IMR-90 (cell line): ENCODE measurements at regions of chr22 and their contacts with region 1.

Region 1: DNA sequence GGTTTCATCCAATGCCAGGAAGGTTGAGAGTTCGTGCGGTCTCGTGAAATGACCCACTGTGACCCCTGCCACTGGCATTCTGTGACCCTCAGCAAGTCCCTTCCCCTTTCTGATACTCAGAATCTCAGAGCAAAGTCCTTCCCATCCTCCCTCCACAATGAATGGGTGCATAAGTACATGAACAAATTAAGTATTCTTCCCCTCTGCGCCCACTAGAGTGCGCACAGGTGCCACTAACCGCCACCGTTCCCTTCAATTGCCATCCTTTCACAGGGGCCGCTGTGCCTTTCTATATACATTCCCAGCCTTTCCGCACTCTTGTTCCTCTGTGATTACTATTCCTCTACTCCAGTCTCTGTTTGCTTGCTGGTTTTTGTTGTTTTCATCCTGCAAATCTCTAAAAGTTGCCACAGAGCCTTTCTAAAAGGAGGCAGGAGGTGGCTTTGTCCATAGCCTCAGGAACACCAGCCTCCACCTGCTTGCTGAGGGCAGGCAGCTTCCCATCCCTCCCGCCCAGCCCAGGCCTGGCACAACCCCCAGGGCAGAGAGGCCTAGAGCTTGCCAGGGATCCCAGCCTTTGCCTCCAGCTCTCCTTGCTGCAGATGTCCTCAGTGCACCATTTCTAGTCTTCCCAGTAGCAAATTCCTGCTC is 6.7 kb upstream of the AP1B1 start:
- DNase-seq: peak; percentile 72
- ATAC-seq: peak; percentile 100
- H3K4me3 ChIP-seq: no peak overlapping the region
- H3K27ac ChIP-seq: no peak overlapping the region
- H3K4me1 ChIP-seq: no peaks in the 10 kb centered on the region
- H3K27me3 ChIP-seq: peaks cover 11% of the 10 kb centered on the region
- CTCF ChIP-seq: peak; percentile 92
- POLR2A ChIP-seq: no peak
- RAD21 ChIP-seq: peak; percentile 91

Region 2: DNA sequence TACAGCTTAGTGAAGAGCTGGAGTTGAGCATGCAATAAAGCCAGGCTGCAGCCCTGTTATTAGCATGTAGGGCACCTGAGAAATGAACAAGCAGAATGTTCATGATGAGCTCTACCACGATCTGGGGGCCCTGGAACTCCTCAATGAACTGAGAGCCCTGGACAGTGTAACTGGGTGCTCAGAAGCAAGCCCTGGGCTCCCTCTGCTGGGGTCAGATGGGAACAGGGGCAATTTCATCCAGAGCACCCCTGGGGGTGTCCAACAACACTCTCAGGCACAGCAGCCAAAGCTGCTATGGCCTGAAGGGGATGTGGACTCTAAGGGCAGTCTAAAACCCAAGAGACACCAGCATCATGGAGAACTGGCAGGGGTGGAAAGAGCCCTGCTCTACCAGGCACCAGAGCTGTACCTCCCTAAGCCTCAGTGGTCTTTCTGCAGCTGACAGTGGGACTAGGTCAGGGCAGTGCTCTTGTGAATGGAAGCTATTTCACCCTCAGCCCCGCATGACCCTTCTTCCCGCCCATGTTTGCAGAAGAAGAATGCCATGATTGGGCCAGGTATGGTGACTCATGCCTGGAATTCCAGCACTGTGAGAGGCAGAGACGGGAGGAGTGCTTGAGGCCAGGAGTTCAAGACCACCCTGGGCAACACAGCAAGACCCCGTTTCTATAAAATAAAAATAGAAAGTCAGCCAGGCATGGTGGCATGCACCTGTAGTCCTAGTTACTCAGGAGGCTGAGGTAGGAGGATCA is 129.6 kb after region 1 on chr22:
- CTCF ChIA-PET with region 1: no interaction called
- POLR2A ChIA-PET with region 1: no interaction called
- dilution Hi-C with region 1: no loop called
- in situ Hi-C with region 1: no loop called
- intact Hi-C with region 1: loop called (anchors 1 kb)
- DNase-seq: peak; percentile 13
- ATAC-seq: peak; percentile 53
- H3K4me3 ChIP-seq: no peak overlapping the region
- H3K27ac ChIP-seq: no peak overlapping the region
- H3K4me1 ChIP-seq: 0 out of 2 replicates have a peak, but pooled peaks cover 4% of the 10 kb centered on the region
- H3K27me3 ChIP-seq: no peaks in the 10 kb centered on the region
- CTCF ChIP-seq: peak; percentile 42
- POLR2A ChIP-seq: no peak
- RAD21 ChIP-seq: peak; percentile 38

Region 3: DNA sequence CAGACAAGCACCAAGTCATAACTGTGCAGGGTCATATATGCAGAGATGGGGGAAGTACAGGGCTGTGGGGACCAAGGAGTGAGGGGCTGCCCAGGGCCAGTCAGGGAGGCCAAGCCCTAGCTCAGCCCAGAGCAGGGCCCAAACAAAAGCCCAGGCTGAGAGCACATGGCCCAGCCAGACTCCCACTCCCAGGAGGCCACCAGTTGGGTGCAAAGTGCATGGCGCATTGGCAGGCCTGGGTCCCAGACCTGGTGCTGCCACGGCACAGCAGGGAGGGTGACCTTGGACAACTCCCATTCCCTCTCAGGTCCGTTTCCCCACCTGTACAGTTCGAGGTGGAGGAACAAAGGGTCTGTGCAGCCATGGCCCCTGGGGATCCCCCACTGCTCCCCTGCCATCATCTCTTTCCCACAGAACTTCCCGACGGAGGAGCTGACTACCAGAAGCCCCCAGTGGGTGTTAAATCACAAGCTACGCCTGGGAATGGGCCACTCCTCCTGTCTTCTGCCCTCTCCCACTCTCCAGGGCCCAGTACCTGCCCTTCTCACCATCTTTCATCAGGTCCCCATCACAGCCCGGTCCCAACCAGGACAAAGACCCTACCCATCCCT is 185.2 kb after region 1 on chr22:
- CTCF ChIA-PET with region 1: no interaction called
- POLR2A ChIA-PET with region 1: no interaction called
- dilution Hi-C with region 1: no loop called
- in situ Hi-C with region 1: no loop called
- intact Hi-C with region 1: no loop called
- DNase-seq: no peak
- ATAC-seq: no peak
- H3K4me3 ChIP-seq: peak overlapping the region; percentile 51
- H3K27ac ChIP-seq: peak overlapping the region; percentile 26
- H3K4me1 ChIP-seq: peaks cover 2% of the 10 kb centered on the region
- H3K27me3 ChIP-seq: no peaks in the 10 kb centered on the region
- CTCF ChIP-seq: no peak
- POLR2A ChIP-seq: no peak
- RAD21 ChIP-seq: no peak